ENCODE measurements at regions of chr10 and their contacts with region 1.

Region 1: GRCh38 chr10:114541081-114541796 is 116.8 kb downstream of the ABLIM1 start:
- DNase-seq: peak; percentile 74
- H3K4me3 Mint-ChIP-seq: peak overlapping the region; percentile 61
- H3K27ac Mint-ChIP-seq: peak overlapping the region; percentile 90
- H3K4me1 Mint-ChIP-seq: peaks cover 82% of the 10 kb centered on the region
- H3K27me3 Mint-ChIP-seq: no peaks in the 10 kb centered on the region

Region 2: DNA sequence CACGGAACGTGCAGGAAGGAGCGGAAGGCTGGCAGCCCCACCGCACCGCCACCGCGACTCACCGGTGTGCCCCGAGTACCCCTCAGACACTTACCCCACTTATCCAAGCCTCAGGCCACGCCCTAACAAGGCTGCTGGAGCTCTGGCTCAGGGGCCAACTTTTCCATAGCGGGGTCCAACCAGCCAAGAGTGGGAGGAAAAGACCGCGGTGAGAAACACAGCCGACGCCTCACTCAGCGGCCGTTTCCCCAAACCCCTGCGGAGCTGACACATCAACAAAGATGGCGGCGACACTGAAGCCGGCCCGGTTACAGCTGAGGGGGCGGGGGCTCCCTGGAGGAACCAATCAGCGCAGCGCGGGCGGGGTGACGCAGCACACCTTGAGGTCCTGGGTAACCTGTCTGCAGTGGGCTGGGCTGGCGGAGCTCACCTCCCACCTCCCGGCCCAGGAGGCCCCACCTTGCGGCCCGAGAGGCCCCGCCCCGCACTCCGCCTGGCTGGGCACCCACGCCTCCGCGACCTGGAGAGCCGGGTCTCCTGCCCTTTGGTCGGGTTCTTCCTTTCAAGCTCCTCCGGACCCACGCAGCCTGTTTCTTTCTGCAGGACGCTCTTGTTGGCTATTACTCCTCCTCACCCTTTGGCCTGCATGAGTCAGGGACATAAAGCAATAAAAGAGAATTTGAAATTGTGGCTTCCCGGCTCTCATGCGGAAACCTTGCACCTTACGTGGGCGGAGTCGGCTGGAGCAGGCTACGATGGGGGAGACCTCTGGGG is 367.1 kb before region 1 on chr10 and contains the start of gene CCDC186:
- intact Hi-C with region 1: loop called (anchors 5 kb)
- DNase-seq: peak; percentile 96
- H3K4me3 Mint-ChIP-seq: peak within 1 kb of the TSS; percentile 95
- H3K27ac Mint-ChIP-seq: peak within 1 kb of the TSS; percentile 91
- H3K4me1 Mint-ChIP-seq: peaks cover 35% of the 10 kb centered on the region
- H3K27me3 Mint-ChIP-seq: peaks cover 12% of the 10 kb centered on the region
- total RNA-seq, gene CCDC186: 12.1 and 13.0 TPM in 2 replicates

Region 3: GRCh38 chr10:114499630-114500190 is 41.5 kb before region 1 on chr10:
- intact Hi-C with region 1: loop called (anchors 1 kb)
- DNase-seq: peak; percentile 59
- H3K4me3 Mint-ChIP-seq: peak overlapping the region; percentile 63
- H3K27ac Mint-ChIP-seq: peak overlapping the region; percentile 85
- H3K4me1 Mint-ChIP-seq: peaks cover 81% of the 10 kb centered on the region
- H3K27me3 Mint-ChIP-seq: no peaks in the 10 kb centered on the region

Region 4: DNA sequence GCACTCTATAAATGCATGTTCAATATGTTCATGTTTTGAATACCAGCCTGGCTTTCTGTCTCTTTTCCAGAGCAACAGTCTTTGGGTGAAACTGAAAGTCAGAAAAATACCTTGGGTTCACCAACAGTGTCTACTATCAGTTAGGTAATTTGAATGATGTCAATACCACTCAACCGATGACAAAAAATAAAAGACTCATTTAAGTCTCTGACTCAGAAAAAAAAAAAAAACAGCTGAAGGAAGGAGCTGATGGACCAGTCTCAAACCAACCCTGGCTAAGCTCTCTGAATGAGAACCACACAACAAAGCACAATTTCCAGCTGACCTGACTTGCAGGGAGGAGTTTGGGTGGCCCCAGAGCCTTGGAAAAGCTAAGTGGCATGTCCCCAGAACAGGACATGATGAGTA is 74.4 kb after region 1 on chr10:
- intact Hi-C with region 1: loop called (anchors 2 kb)
- DNase-seq: no peak
- H3K4me3 Mint-ChIP-seq: peak overlapping the region; percentile 11
- H3K27ac Mint-ChIP-seq: peak overlapping the region; percentile 36
- H3K4me1 Mint-ChIP-seq: peaks cover 22% of the 10 kb centered on the region
- H3K27me3 Mint-ChIP-seq: peaks cover 9% of the 10 kb centered on the region

Region 5: GRCh38 chr10:114839901-114840300 is 298.7 kb after region 1 on chr10:
- intact Hi-C with region 1: no loop called
- DNase-seq: no peak
- H3K4me3 Mint-ChIP-seq: no peak overlapping the region
- H3K27ac Mint-ChIP-seq: no peak overlapping the region
- H3K4me1 Mint-ChIP-seq: no peaks in the 10 kb centered on the region
- H3K27me3 Mint-ChIP-seq: no peaks in the 10 kb centered on the region

Region 6: GRCh38 chr10:114937962-114938855 is 397.0 kb after region 1 on chr10 and contains the start of gene TRUB1:
- intact Hi-C with region 1: loop called (anchors 5 kb)
- DNase-seq: peak; percentile 83
- H3K4me3 Mint-ChIP-seq: peak within 1 kb of the TSS; percentile 99
- H3K27ac Mint-ChIP-seq: peak within 1 kb of the TSS; percentile 84
- H3K4me1 Mint-ChIP-seq: peaks cover 35% of the 10 kb centered on the region
- H3K27me3 Mint-ChIP-seq: no peaks in the 10 kb centered on the region
- total RNA-seq, gene TRUB1: 21.6 TPM in 2 replicates

Measured in activated T-helper 1 cell treated with anti-CD3 and anti-CD28 coated beads, Interleukin-12 subunit alpha, Interleukin-12 subunit beta, Interleukin-2, Interleukin-4 antibody, amounts not matched to agents 30 ng/mL and 10 ng/mL and 1 ng/mL, durations not matched to agents 14 hours and 24 hours and 36 hours (primary cell).